GM12878 (cell line): ENCODE measurements at regions of chr11 and their contacts with region 1.

Region 1: GRCh38 chr11:74388678-74389327 is 9.4 kb downstream of the PGM2L1 start:
- DNase-seq: peak; percentile 8
- ATAC-seq: peak; percentile 95
- H3K4me3 ChIP-seq: no peak overlapping the region
- H3K27ac ChIP-seq: no peak overlapping the region
- H3K4me1 ChIP-seq: no peaks in the 10 kb centered on the region
- H3K27me3 ChIP-seq: no peaks in the 10 kb centered on the region
- CTCF ChIP-seq: peak; percentile 66 to 73 (median 69); a peak in 5 of 6 replicates
- EP300 ChIP-seq: no peak
- POLR2A ChIP-seq: no peak
- RAD21 ChIP-seq: peak; percentile 73

Region 2: DNA sequence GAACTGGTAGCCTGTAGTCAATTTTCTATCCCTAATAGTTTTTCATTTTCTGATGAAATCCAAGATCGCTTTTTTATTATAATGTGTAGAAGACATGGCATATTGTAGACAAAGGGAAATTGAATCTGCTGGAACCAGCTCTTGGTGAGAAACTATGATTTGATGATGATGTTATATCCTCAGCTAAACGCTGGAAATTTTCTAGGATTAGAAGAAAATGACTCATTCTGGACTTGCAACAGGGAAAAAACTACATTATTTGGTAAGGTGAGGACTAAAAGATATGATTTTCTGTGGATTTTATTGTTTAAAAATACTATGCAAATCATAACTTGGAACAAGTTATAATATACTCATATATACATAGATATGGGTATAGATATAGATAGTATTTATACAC is 23.5 kb after region 1 on chr11:
- CTCF ChIA-PET with region 1: interaction called, 17 read pairs
- POLR2A ChIA-PET with region 1: no interaction called
- RAD21 ChIA-PET with region 1: no interaction called
- SMC1A ChIA-PET with region 1: interaction called, 4 read pairs
- in situ Hi-C with region 1: no loop called
- intact Hi-C with region 1: no loop called
- DNase-seq: no peak
- ATAC-seq: no peak
- H3K4me3 ChIP-seq: no peak overlapping the region
- H3K27ac ChIP-seq: no peak overlapping the region
- H3K4me1 ChIP-seq: no peaks in the 10 kb centered on the region
- H3K27me3 ChIP-seq: no peaks in the 10 kb centered on the region
- CTCF ChIP-seq: no peak
- EP300 ChIP-seq: no peak
- POLR2A ChIP-seq: no peak
- RAD21 ChIP-seq: no peak